HEK293 (cell line): ENCODE measurements at regions of chr9 and their contacts with region 1.

Region 1: GRCh38 chr9:136865735-136866103 is 389 bp downstream of the EDF1 start:
- H3K4me3 ChIP-seq: peak overlapping the region; percentile 87
- H3K27ac ChIP-seq: peak overlapping the region; percentile 74
- H3K4me1 ChIP-seq: no peaks in the 10 kb centered on the region
- CTCF ChIP-seq: no peak

Region 2: DNA sequence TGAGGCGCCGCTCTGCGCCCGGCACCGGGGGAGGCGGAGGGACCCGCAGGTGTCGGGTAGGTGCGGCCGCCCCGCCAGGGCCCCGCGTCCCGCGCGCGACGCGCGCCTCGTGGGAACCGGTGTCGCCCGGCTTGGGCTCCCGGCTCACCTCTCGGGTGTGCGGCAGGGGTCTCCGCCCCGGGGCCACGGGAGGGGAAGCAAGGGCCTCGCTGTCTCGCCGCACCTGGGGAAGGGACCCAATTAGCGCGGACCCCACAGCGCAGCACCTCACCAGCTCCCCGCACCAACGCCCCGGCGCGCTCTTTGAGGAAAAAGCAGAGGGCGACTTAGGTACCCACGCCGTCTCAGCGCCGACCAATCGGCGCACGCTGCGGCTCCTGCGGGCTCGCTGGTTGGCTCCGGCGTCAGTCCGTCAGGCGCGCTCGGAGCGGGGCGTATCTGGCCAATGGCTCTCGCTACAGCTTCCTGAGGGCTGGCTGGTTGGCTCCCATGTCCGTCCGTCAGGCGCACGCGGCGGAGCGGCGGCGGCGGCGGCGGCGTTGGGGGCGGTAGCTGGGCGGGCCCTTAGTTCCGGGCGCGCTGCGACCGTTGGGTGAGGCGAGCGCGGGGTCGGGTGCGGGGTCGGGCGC is 20.3 kb after region 1 on chr9 and contains the start of gene TRAF2:
- CTCF ChIA-PET with region 1: interaction called, 3 read pairs
- POLR2A ChIA-PET with region 1: interaction called, 15 read pairs
- H3K4me3 ChIP-seq: peak within 1 kb of the TSS; percentile 81
- H3K27ac ChIP-seq: peak within 1 kb of the TSS; percentile 86; the same call in 1 of the 2 replicates
- H3K4me1 ChIP-seq: no peaks in the 10 kb centered on the region
- CTCF ChIP-seq: no peak